Right cardiac atrium (tissue), 5 donors: ENCODE measurements at regions of chr5 and their contacts with region 1.

Region 1: GRCh38 chr5:64784451-64785025 is 15.8 kb downstream of the CWC27 start:
- DNase-seq: peak; percentile 45 to 63 (median 61)
- ATAC-seq: peak; percentile 64 to 66
- H3K4me3 ChIP-seq: no peak overlapping the region
- H3K27ac ChIP-seq: no peak overlapping the region
- H3K4me1 ChIP-seq: no peaks in the 10 kb centered on the region
- H3K27me3 ChIP-seq: no peaks in the 10 kb centered on the region

Region 2: GRCh38 chr5:64634997-64635686 is 149.4 kb before region 1 on chr5:
- intact Hi-C with region 1: loop called (anchors 5 kb)
- DNase-seq: no peak
- ATAC-seq: no peak
- H3K4me3 ChIP-seq: no peak overlapping the region
- H3K27ac ChIP-seq: no peak overlapping the region
- H3K4me1 ChIP-seq: no peaks in the 10 kb centered on the region
- H3K27me3 ChIP-seq: no peaks in the 10 kb centered on the region

Region 3: DNA sequence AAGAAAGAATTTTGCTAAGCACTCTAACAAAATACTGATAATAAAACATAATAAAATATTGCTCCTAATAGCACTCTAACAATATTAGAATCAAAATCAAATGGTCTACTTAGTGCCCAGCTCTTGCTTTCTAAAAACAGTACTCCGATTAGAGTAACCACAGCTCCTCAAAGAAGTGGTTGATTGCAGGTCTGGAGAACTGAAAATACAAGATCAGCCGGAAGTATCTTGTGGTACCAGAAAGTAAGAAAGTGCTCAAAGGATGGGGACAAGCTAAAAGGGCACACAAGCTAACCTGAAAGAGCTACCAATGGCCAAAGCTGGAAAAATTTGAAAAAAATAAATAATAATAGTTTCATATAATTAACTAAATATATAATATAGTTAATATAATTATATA is 103.4 kb after region 1 on chr5:
- intact Hi-C with region 1: no loop called
- DNase-seq: no peak
- ATAC-seq: no peak
- H3K4me3 ChIP-seq: no peak overlapping the region
- H3K27ac ChIP-seq: no peak overlapping the region
- H3K4me1 ChIP-seq: peaks cover 1% of the 10 kb centered on the region
- H3K27me3 ChIP-seq: no peaks in the 10 kb centered on the region

Region 4: DNA sequence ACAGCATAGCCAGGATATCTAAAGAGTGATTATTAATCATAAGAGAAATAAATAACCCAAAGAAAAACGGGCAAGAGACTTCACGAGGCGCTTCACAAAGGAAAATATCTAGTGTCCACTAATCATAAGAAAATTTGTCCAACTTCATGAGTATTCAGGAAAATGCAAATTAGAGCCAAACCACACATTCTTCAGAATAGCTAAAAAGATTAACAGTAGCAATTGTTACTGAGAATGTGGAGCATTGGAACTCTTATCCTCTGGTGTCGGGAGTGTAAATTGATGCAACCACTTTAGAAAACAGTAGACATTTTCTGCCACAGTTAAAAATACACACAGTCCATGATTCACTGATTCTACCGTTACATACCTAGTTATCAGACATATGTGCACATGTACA is 129.9 kb after region 1 on chr5:
- intact Hi-C with region 1: no loop called
- DNase-seq: no peak
- ATAC-seq: no peak
- H3K4me3 ChIP-seq: no peak overlapping the region
- H3K27ac ChIP-seq: no peak overlapping the region
- H3K4me1 ChIP-seq: no peaks in the 10 kb centered on the region
- H3K27me3 ChIP-seq: no peaks in the 10 kb centered on the region

Region 5: DNA sequence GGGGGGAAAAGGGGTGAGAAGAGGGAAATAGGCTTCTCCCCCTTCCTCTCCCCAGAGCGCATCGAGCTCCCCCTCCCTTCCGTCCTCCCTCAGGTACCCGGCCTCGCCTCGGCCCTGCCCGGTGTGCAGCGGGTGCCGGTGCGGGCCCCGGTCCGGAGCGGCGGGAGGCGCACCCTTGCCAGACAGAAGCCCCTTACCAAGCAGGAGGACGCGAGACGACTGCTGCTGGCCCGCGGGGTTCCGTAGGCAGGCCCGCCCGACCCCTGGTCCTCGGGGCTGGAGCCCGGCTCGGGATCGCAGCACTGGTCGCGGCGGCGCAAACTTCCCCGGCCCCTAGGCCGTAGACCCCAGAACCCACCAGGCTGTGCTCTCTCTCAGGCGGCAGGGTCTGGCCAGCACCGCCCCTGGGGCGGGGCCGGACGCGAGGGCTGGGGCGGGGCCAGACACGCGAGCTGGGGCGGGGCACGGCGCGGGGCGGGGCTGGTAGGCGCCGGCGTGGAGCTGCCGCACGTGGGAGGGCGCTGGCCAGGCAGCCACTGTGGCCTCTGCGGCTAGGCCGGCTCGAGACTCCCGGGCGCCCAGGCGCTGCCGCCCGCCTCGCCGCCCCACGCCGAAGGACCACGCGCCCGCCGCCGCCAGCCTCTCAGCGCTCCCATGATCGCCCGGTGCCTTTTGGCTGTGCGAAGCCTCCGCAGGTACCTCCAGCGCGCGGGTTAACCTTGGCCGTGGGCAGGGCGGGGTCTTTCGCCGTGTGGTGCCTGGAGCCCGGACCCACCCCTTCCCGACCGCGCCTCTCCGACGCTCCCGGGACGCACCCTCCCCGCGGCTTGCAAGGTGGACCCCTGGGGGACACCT is 937.4 kb after region 1 on chr5 and contains the starts of genes NLN and SGTB:
- intact Hi-C with region 1: no loop called
- DNase-seq: peak; percentile 89 to 95 (median 95)
- ATAC-seq: peak; percentile 99
- H3K4me3 ChIP-seq: peak within 1 kb of the TSS; percentile 93
- H3K27ac ChIP-seq: peak within 1 kb of the TSS; percentile 80
- H3K4me1 ChIP-seq: no peaks in the 10 kb centered on the region
- H3K27me3 ChIP-seq: no peaks in the 10 kb centered on the region
- total RNA-seq, gene NLN: 8.5 to 11.9 (median 11.3) TPM
- total RNA-seq, gene SGTB: 8.7 to 10.2 (median 9.4) TPM